ENCODE measurements at regions of chr6 and their contacts with region 1.

Region 1: GRCh38 chr6:159654483-159655098 is 38.5 kb downstream of the SOD2 start:
- DNase-seq: peak; percentile 43
- H3K4me3 ChIP-seq: no peak overlapping the region
- H3K27ac ChIP-seq: no peak overlapping the region
- H3K4me1 ChIP-seq: no peaks in the 10 kb centered on the region
- H3K27me3 ChIP-seq: no peaks in the 10 kb centered on the region
- CTCF ChIP-seq: peak; percentile 17 to 27
- POLR2A ChIP-seq: no peak

Region 2: DNA sequence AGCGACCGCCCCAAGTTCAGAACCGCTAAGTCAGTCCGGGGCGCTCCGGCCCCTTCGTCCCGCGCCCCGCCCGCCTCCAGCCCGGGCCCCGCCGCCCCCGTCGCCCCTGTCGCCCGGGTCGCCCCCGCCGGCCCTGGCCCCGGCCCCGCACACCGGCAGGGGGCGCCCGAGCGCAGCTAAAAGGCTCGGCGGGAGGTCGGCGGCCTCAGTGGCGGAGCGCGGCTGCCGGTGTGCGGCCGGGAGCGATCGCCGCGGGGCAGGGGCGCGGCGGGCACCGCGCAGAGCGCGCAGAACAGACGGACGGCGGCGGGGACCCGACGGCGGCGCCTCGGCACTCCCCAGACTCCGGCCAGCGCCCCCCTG is 485.4 kb before region 1 on chr6 and contains the start of gene FNDC1:
- CTCF ChIA-PET with region 1: interaction called, 193 read pairs
- POLR2A ChIA-PET with region 1: no interaction called
- dilution Hi-C with region 1: no loop called
- intact Hi-C with region 1: loop called (anchors 1 kb)
- DNase-seq: no peak
- H3K4me3 ChIP-seq: peak within 1 kb of the TSS in 2 of 3 experiments; percentile 11 to 27
- H3K27ac ChIP-seq: no peak within 1 kb of the TSS
- H3K4me1 ChIP-seq: peaks cover 3% of the 10 kb centered on the region
- H3K27me3 ChIP-seq: peaks cover 48 to 77% of the 10 kb centered on the region in 2 experiments
- CTCF ChIP-seq: peak; percentile 15 to 26
- POLR2A ChIP-seq: no peak
- total RNA-seq, gene FNDC1: 0.04 TPM in 1 of 2 replicates, not detected in the other

Region 3: DNA sequence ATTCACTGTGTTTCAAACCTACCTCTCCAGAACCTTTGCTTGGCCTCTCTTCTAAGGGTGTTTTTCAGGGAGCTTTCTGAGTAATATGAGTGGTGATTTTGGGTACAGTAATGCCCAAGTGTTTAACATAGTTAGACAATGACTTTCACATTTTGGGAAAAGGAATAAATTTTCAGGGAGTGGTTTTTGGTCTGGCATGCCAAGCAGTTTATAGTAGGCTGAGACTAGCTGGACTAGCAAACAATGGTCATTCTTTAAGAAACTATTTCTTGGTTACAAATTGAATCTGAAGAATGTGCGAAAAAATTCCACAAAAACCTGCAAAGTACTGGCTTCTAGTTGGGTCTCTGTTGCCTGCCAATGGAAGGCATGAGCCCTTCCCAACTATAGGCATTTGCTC is 470.0 kb before region 1 on chr6:
- CTCF ChIA-PET with region 1: interaction called, 12 read pairs
- POLR2A ChIA-PET with region 1: no interaction called
- dilution Hi-C with region 1: no loop called
- intact Hi-C with region 1: no loop called
- DNase-seq: no peak
- H3K4me3 ChIP-seq: no peak overlapping the region
- H3K27ac ChIP-seq: no peak overlapping the region
- H3K4me1 ChIP-seq: no peaks in the 10 kb centered on the region
- H3K27me3 ChIP-seq: no peaks in the 10 kb centered on the region
- CTCF ChIP-seq: no peak
- POLR2A ChIP-seq: no peak

Region 4: DNA sequence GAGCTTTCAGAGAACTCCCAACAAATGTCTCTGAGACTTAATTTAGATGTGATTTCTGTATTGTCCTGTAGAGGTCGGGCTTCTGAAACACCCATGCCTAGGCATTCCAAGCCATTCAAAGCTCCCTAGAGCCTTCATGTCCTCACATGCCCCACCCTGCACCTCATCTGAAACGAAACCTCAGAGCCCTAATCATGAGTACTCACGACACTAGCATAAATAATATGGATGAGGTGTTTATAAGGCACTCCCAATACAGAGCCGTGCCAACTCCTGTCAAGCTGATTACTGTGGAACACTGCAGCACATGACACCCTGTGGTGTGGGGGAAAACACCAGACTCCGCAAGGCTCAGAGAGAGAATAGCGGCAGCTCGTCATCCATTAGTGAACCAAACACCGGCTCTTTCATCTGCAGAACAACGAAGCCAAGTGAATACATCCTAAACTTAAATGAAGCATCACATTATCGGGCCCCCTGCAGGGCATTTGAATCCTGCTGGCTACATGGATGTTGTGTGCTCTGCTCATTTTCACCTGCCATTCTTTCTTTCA is 401.6 kb before region 1 on chr6:
- CTCF ChIA-PET with region 1: interaction called, 4 read pairs
- POLR2A ChIA-PET with region 1: no interaction called
- dilution Hi-C with region 1: no loop called
- intact Hi-C with region 1: loop called (anchors 1 kb)
- DNase-seq: no peak
- H3K4me3 ChIP-seq: no peak overlapping the region
- H3K27ac ChIP-seq: no peak overlapping the region
- H3K4me1 ChIP-seq: no peaks in the 10 kb centered on the region
- H3K27me3 ChIP-seq: no peaks in the 10 kb centered on the region
- CTCF ChIP-seq: no peak
- POLR2A ChIP-seq: no peak

Region 5: GRCh38 chr6:159665868-159666635 is 11.5 kb after region 1 on chr6:
- CTCF ChIA-PET with region 1: interaction called, 12 read pairs
- POLR2A ChIA-PET with region 1: no interaction called
- dilution Hi-C with region 1: no loop called
- intact Hi-C with region 1: no loop called
- DNase-seq: no peak
- H3K4me3 ChIP-seq: no peak overlapping the region
- H3K27ac ChIP-seq: no peak overlapping the region
- H3K4me1 ChIP-seq: no peaks in the 10 kb centered on the region
- H3K27me3 ChIP-seq: no peaks in the 10 kb centered on the region
- CTCF ChIP-seq: no peak
- POLR2A ChIP-seq: no peak